Activated CD4-positive, alpha-beta memory T cell treated with anti-CD3 and anti-CD28 coated beads, Interleukin-2, amount 10 ng/mL, durations not matched to agents 7 days and 5 days (primary cell): ENCODE measurements at regions of chr6 and their contacts with region 1.

Region 1: DNA sequence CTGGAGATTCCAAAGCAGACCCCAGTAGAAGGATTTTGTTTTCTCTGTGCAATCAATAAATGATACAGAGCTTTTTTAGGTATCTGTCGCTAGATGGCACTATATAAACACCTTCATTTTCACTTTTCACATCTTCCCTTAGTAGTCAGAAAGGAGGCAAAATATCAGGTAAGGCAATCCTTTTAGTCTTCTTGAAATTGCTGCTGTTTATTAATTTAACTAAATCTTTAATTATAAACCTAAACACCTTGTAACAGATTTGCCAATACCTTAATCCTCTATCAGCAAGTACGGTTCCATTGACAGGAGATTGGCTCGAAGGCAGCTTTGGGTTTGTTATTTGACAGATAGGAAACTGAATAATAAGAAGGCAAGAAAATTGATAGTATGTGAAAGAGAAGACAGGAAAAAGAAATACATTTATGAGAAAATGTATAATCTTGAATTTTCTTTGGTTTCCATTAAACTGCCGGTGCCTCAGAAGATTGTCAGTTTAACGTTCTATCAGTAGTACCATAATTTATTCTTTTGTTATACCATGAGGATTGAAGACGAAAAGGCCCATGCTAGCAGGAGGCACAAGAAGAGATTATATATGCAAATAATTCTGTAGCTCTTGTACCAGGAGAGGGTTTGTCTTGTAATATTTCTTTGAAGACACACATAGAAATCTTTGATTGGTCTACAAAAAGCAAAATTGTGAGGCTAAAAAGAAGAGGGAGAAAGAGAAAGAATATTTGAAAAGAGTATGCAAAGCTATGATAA is 23.5 kb upstream of the IBTK start:
- DNase-seq: no peak
- H3K4me3 Mint-ChIP-seq: no peak overlapping the region
- H3K27ac Mint-ChIP-seq: no peak overlapping the region
- H3K4me1 Mint-ChIP-seq: no peaks in the 10 kb centered on the region
- H3K27me3 Mint-ChIP-seq: peaks cover 3% of the 10 kb centered on the region

Region 2: DNA sequence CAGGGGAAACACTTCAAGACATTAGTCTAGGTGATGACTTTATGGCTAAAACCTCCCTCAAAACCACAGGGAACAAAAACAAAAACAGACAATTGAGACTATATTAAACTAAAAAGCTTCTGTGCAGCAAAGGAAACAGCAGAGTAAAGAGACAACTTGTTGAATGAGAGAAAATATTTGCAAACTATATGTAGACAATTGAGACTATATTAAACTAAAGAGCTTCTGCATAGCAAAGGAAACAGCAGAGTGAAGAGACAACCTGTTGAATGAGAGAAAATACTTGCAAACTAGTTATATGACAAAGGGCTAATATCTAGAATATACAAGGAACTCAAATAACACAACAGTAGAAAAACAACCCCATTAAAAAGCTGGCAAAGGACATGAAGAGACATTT is 159.9 kb before region 1 on chr6:
- CTCF ChIA-PET with region 1: no interaction called
- POLR2A ChIA-PET with region 1: no interaction called
- DNase-seq: no peak
- H3K4me3 Mint-ChIP-seq: no peak overlapping the region
- H3K27ac Mint-ChIP-seq: no peak overlapping the region
- H3K4me1 Mint-ChIP-seq: no peaks in the 10 kb centered on the region
- H3K27me3 Mint-ChIP-seq: no peaks in the 10 kb centered on the region

Region 3: DNA sequence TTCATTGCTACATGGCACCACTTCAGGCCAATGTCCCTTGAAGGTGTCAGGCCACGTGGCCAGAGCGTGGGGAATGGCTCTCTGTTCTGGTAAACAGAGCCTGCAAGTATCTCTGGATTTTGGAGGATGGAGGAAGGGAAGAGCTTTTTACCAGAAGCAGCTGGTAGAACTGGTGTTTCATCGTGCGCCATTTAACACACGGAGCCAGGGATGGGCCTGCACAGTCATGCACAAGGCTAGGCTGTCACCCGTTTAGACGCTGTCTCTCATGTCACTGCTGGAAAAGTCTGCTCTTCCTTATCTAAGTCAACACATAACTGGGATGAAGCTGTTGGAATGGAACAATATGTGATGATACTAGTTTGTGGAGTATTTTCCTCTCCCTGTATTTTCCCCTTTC is 147.4 kb before region 1 on chr6:
- CTCF ChIA-PET with region 1: no interaction called
- POLR2A ChIA-PET with region 1: no interaction called
- DNase-seq: no peak
- H3K4me3 Mint-ChIP-seq: no peak overlapping the region
- H3K27ac Mint-ChIP-seq: no peak overlapping the region
- H3K4me1 Mint-ChIP-seq: no peaks in the 10 kb centered on the region
- H3K27me3 Mint-ChIP-seq: no peaks in the 10 kb centered on the region

Region 4: DNA sequence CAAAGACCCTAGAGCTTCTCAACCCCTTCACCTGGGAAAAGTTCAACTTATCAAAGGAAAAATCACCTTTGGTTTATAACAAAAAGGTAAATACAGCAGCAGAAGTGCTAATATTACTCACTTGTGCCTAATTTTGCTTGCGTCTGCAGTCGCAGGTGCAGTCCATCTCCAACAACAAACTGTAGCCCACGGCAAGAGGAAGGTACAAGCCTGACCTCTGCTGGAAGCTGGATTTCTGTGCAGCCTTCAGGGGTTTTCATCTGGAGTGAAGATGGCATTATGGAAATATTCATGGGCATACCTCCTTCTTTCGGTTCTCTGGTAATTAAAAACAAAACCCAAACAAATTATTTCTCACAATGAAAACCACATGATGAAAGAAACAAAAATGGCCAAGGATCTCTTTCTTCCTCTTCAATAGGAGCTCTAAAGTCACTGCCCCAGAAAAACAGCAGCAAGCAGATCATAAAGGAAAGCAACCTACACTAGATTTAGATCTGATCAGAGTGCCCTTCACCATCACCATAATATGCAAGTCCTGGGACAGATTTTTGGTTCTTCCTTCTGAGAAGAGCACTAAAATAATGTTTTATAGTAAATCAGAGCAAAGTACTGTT is 786.8 kb after region 1 on chr6:
- CTCF ChIA-PET with region 1: interaction called, 16 read pairs
- POLR2A ChIA-PET with region 1: no interaction called
- DNase-seq: peak; percentile 20
- H3K4me3 Mint-ChIP-seq: no peak overlapping the region
- H3K27ac Mint-ChIP-seq: no peak overlapping the region
- H3K4me1 Mint-ChIP-seq: no peaks in the 10 kb centered on the region
- H3K27me3 Mint-ChIP-seq: no peaks in the 10 kb centered on the region